Activated naive CD4-positive, alpha-beta T cell treated with anti-CD3 and anti-CD28 coated beads for 36 hours (primary cell): ENCODE measurements at regions of chr6 and their contacts with region 1.

Region 1: DNA sequence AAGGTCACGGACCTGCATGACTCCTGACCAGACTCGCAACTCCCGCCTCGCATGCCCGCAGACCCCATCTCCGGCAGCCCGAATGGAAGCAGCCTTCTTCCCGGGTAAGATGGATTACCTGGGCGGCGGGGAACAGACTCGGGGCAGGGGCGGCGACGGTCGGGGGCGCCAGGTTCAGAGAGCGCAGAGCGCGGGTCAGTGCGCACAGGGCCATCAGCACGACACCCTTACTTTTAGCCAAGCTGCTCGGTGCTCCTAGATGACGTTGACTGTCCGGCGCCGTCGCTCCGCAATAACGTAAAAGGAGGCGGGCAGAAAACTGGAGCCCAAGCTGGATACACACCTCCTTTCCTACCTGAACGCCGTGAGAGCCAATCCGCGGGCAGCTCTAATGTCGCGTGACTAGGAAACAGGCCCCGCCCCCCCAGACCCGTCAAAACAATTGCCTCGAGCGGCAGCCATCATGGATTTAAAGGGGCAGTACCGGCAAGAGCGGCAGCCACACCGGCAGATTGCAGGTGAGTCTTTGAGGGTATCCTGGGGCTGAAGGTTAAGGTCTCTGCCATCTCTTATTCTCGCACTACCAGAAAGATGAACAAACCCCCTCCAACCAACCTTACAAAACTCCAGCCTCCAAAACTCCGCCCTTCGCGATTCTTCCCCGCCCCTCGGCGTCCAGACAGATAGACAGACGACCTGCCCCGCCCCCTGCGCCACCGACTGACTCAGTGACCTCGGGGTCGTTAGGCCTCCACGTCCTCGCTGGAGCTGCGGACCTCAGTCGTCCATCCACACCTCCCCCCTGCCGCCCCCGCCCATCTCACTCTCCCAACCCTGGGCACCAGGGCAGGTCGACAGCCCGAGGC is at the starts of genes KLC4 and MRPL2:
- DNase-seq: peak; percentile 99
- H3K4me3 Mint-ChIP-seq: peak within 1 kb of the TSS; percentile 86
- H3K27ac Mint-ChIP-seq: peak within 1 kb of the TSS; percentile 93
- H3K4me1 Mint-ChIP-seq: peaks cover 29% of the 10 kb centered on the region
- H3K27me3 Mint-ChIP-seq: no peaks in the 10 kb centered on the region
- total RNA-seq, gene KLC4: 12.0 to 12.3 TPM
- total RNA-seq, gene MRPL2: 87.7 to 95.1 TPM

Region 2: GRCh38 chr6:42782622-42783176 is 276.7 kb before region 1 on chr6:
- CTCF ChIA-PET with region 1: no interaction called
- intact Hi-C with region 1: loop called (anchors 5 kb)
- DNase-seq: peak; percentile 75
- H3K4me3 Mint-ChIP-seq: peak overlapping the region; percentile 81
- H3K27ac Mint-ChIP-seq: peak overlapping the region; percentile 100
- H3K4me1 Mint-ChIP-seq: peaks cover 26% of the 10 kb centered on the region
- H3K27me3 Mint-ChIP-seq: no peaks in the 10 kb centered on the region

Region 3: DNA sequence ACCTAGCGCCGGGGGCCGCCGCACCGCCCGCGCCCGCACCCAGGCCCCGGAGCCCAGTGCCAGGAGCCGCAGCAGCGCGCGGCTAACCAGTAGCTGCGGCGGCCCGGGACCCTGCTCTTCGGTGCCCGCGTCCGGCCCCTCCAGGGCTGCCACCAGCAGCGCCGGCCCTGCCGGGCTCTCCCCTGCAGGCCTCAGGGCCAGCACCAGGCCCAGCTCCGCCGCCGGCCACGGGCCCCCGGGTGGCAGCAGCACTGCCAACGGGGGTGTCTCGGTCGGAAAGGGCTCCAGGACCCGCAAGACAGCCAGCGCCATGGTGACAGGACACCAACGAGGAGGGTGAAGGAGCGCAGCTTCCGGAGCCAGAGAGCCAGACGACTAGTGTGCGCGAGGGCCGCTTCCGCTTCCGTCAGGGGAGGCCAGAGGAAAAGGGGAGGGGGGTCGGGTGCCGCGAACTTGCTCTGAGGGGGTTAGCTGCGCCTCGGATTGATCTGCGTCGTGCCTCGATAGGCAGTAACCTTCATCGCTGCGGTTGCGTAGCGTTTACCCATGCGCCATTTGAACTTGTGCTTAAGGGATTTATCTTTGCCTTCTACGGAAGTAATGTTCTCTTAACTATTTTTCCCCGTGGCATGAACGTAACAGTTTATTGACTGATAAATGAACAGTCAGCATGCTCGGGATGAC is 80.4 kb before region 1 on chr6 and contains the start of gene PEX6:
- CTCF ChIA-PET with region 1: no interaction called
- intact Hi-C with region 1: loop called (anchors 1 kb)
- DNase-seq: peak; percentile 97
- H3K4me3 Mint-ChIP-seq: peak within 1 kb of the TSS; percentile 95
- H3K27ac Mint-ChIP-seq: peak within 1 kb of the TSS; percentile 99
- H3K4me1 Mint-ChIP-seq: peaks cover 53% of the 10 kb centered on the region
- H3K27me3 Mint-ChIP-seq: no peaks in the 10 kb centered on the region
- total RNA-seq, gene PEX6: 17.1 to 18.2 TPM

Region 4: GRCh38 chr6:43013843-43014433 is 45.5 kb before region 1 on chr6 and contains the starts of genes KLHDC3 and MEA1:
- CTCF ChIA-PET with region 1: interaction called, 3 read pairs
- intact Hi-C with region 1: loop called (anchors 1 kb)
- DNase-seq: peak; percentile 100
- H3K4me3 Mint-ChIP-seq: peak within 1 kb of the TSS; percentile 95
- H3K27ac Mint-ChIP-seq: peak within 1 kb of the TSS; percentile 88
- H3K4me1 Mint-ChIP-seq: peaks cover 53% of the 10 kb centered on the region
- H3K27me3 Mint-ChIP-seq: no peaks in the 10 kb centered on the region
- total RNA-seq, gene KLHDC3: 58.6 to 58.9 TPM
- total RNA-seq, gene MEA1: 80.6 to 85.1 TPM

Region 5: DNA sequence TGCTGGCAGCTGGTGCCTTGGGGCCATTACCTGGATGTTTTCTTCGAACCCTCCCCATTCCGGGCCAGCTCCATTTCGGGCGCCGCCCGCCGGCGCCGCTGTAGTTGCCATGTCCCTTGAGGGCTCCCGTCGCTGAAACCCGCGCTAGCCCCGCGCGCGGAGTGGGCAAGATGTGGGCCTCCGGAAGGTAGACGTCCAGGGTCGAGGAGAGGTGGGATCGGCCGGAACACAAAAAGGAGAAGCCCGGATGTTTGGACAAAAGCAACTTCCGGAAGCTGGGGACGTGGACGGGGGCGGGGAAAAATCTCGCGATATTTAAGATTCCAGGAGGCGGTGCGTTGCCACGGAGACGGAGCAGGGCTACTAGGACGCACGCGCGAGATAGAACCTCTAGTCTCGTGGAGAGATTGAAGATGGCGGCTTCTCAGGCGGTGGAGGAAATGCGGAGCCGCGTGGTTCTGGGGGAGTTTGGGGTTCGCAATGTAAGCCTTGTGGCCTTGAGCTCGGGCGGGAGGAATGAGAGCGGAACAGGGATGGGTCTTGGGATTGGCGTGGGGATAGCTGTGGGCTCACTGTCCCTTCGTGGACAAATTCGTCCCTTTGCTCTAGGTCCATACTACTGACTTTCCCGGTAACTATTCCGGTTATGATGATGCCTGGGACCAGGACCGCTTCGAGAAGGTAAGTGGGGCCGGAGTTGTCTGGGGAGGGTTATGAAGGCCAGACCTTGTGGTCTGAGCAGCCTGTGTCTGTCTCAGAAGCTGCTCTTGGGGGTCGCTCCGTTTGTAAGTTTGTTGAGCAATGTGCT is 457.5 kb after region 1 on chr6 and contains the starts of genes POLR1C and YIPF3:
- CTCF ChIA-PET with region 1: no interaction called
- intact Hi-C with region 1: loop called (anchors 1 kb)
- DNase-seq: peak; percentile 99
- H3K4me3 Mint-ChIP-seq: no peak within 1 kb of the TSS
- H3K27ac Mint-ChIP-seq: no peak within 1 kb of the TSS
- H3K4me1 Mint-ChIP-seq: peaks cover 28% of the 10 kb centered on the region
- H3K27me3 Mint-ChIP-seq: no peaks in the 10 kb centered on the region
- total RNA-seq, gene POLR1C: 47.5 to 50.1 TPM
- total RNA-seq, gene YIPF3: 26.2 to 26.5 TPM